Endothelial cell of umbilical vein (primary cell): ENCODE measurements at regions of chr9 and their contacts with region 1.

Region 1: GRCh38 chr9:73023025-73023541 is 70.2 kb upstream of the ALDH1A1 start:
- DNase-seq: peak; percentile 80
- H3K4me3 ChIP-seq: no peak overlapping the region
- H3K27ac ChIP-seq: peak overlapping the region; percentile 59
- H3K4me1 ChIP-seq: peaks cover 20% of the 10 kb centered on the region
- H3K27me3 ChIP-seq: no peaks in the 10 kb centered on the region
- CTCF ChIP-seq: peak; percentile 65 to 75
- POLR2A ChIP-seq: no peak

Region 2: GRCh38 chr9:72882117-72882775 is 140.8 kb before region 1 on chr9:
- CTCF ChIA-PET with region 1: interaction called, 11 read pairs
- POLR2A ChIA-PET with region 1: no interaction called
- dilution Hi-C with region 1: no loop called
- intact Hi-C with region 1: no loop called
- DNase-seq: no peak
- H3K4me3 ChIP-seq: no peak overlapping the region
- H3K27ac ChIP-seq: no peak overlapping the region
- H3K4me1 ChIP-seq: no peaks in the 10 kb centered on the region
- H3K27me3 ChIP-seq: no peaks in the 10 kb centered on the region
- CTCF ChIP-seq: no peak
- POLR2A ChIP-seq: no peak

Region 3: GRCh38 chr9:72931437-72931836 is 91.6 kb before region 1 on chr9:
- CTCF ChIA-PET with region 1: interaction called, 10 read pairs
- POLR2A ChIA-PET with region 1: no interaction called
- dilution Hi-C with region 1: no loop called
- intact Hi-C with region 1: no loop called
- DNase-seq: no peak
- H3K4me3 ChIP-seq: no peak overlapping the region
- H3K27ac ChIP-seq: no peak overlapping the region
- H3K4me1 ChIP-seq: no peaks in the 10 kb centered on the region
- H3K27me3 ChIP-seq: no peaks in the 10 kb centered on the region
- CTCF ChIP-seq: no peak
- POLR2A ChIP-seq: no peak

Region 4: DNA sequence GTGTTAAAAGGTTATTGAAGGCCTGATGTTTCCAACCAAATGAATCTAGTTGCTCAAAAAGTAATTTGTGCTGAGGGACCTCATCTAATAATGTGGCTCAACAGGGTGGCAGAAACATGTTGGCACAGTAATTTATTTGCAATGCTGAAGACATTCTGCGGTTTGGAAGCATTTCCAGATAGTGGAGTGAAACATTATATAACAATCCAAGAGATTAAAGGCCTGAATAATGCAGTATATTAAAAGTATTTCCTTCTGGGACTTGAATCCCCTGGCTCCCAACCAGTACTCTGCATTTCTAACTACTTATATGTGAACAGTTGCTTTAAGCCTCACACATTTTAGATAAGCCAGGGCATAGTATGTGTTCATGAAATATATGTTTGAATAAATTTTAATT is 44.3 kb before region 1 on chr9:
- CTCF ChIA-PET with region 1: interaction called, 14 read pairs
- POLR2A ChIA-PET with region 1: interaction called, 9 read pairs
- dilution Hi-C with region 1: no loop called
- intact Hi-C with region 1: no loop called
- DNase-seq: no peak
- H3K4me3 ChIP-seq: no peak overlapping the region
- H3K27ac ChIP-seq: no peak overlapping the region
- H3K4me1 ChIP-seq: no peaks in the 10 kb centered on the region
- H3K27me3 ChIP-seq: no peaks in the 10 kb centered on the region
- CTCF ChIP-seq: no peak
- POLR2A ChIP-seq: no peak

Region 5: DNA sequence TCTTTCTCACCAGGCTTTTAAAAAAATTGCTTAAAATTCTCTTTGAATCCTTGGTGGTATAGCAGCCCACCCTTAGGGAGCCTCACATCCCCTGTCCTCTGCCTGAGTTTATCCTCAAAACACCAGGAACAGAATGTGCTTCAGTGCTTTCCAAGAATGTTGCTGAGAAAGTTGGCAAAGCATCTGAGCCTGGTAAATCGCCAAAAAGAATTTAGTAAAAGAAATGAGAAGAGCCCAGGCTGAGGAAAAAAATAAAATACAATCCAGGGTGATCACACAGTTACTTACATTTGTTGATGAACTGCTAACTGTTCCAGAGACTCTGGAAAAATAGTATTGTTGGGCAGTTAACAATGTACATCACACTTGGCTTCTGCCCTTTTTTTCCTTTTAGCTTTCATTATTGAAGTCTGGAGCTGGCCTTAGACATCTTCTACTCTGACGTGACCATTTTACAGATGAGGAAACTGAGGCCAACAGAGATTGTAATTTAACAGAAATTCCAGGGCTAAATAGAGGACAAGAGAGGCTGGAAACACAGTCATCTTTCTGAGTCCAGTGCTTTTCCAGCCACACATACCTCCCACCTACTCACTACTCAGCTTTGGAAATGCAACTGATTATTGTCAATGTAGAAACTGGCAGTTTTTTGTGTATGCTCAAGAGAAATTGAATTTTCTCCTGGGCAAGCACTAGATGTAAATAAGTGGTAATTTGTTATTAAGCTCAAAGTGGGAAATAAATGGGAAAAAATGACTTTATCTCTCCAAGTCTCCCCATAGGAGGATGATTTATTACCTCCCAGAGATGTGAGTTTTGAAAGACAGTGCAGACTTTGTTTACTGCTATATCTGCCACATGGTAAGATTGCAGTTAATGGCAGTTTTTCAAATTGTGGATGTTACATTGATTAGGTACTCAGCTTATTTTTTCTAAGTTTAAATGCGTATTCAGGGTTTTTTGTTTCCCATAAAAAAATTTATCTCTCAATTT is 16.5 kb after region 1 on chr9:
- CTCF ChIA-PET with region 1: interaction called, 11 read pairs
- POLR2A ChIA-PET with region 1: no interaction called
- dilution Hi-C with region 1: no loop called
- intact Hi-C with region 1: loop called (anchors 2 kb)
- DNase-seq: peak; percentile 43
- H3K4me3 ChIP-seq: no peak overlapping the region
- H3K27ac ChIP-seq: no peak overlapping the region
- H3K4me1 ChIP-seq: no peaks in the 10 kb centered on the region
- H3K27me3 ChIP-seq: no peaks in the 10 kb centered on the region
- CTCF ChIP-seq: no peak
- POLR2A ChIP-seq: no peak

Region 6: GRCh38 chr9:73149371-73150067 is 126.4 kb after region 1 on chr9:
- CTCF ChIA-PET with region 1: no interaction called
- POLR2A ChIA-PET with region 1: no interaction called
- dilution Hi-C with region 1: no loop called
- intact Hi-C with region 1: no loop called
- DNase-seq: peak; percentile 88
- H3K4me3 ChIP-seq: peak overlapping the region in 1 of 3 experiments; percentile 23
- H3K27ac ChIP-seq: peak overlapping the region; percentile 77
- H3K4me1 ChIP-seq: peaks cover 44% of the 10 kb centered on the region
- H3K27me3 ChIP-seq: no peaks in the 10 kb centered on the region
- CTCF ChIP-seq: no peak
- POLR2A ChIP-seq: no peak

Region 7: GRCh38 chr9:73183917-73184861 is 161.1 kb after region 1 on chr9:
- CTCF ChIA-PET with region 1: interaction called, 3 read pairs
- POLR2A ChIA-PET with region 1: no interaction called
- dilution Hi-C with region 1: no loop called
- intact Hi-C with region 1: loop called (anchors 1 kb)
- DNase-seq: peak; percentile 47
- H3K4me3 ChIP-seq: no peak overlapping the region
- H3K27ac ChIP-seq: no peak overlapping the region
- H3K4me1 ChIP-seq: no peaks in the 10 kb centered on the region
- H3K27me3 ChIP-seq: no peaks in the 10 kb centered on the region
- CTCF ChIP-seq: peak; percentile 9 to 10
- POLR2A ChIP-seq: no peak

Region 8: GRCh38 chr9:73200694-73201452 is 177.8 kb after region 1 on chr9:
- CTCF ChIA-PET with region 1: no interaction called
- POLR2A ChIA-PET with region 1: no interaction called
- dilution Hi-C with region 1: no loop called
- intact Hi-C with region 1: no loop called
- DNase-seq: peak; percentile 39
- H3K4me3 ChIP-seq: no peak overlapping the region
- H3K27ac ChIP-seq: no peak overlapping the region
- H3K4me1 ChIP-seq: no peaks in the 10 kb centered on the region
- H3K27me3 ChIP-seq: peaks cover 4 to 10% of the 10 kb centered on the region in 2 experiments
- CTCF ChIP-seq: peak; percentile 37 to 40
- POLR2A ChIP-seq: no peak